Left colon (tissue), 2 donors: ENCODE measurements at regions of chr18 and their contacts with region 1.

Region 1: DNA sequence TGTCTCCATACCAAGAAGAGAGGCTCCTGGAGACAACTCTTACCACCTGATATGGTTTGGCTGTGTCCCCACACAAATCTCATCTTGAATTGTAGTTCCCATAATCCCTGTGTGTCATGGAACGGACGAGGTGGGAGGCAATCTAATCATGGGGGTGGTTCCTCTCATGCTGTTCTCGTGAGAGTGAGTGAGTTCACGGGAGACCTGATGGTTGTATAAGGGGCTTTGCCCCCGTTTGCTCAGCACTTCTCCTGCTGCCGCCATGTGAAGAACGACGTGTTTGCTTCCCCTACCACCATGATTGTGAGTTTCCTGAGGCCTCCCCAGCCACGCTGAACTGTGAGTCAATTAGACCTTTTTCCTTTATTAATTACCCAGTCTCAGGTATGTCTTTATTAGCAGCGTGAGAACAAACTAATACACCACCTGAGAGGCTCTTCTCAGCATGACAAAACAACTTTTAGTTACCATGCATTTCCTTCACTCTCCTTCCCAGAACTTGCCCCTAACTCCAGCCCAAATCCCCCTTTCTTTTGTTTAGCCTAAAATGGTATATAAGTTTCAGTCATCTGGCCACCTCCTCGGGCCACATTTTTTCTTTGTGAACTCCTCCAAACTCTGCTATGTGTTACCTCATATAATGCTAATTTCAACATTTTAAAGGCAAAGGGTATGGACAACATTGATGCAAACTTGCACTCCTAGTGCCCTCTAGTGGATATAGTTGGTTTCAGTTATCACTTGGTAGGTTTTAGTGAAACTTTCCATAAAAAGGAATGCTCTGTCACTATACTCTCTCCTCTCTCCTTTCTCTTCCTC is 58.6 kb upstream of the SLC25A52 start:
- DNase-seq: no peak
- ATAC-seq: peak; percentile 62

Region 2: GRCh38 chr18:31378834-31379233 is 440.5 kb before region 1 on chr18:
- intact Hi-C with region 1: no loop called
- DNase-seq: no peak
- ATAC-seq: no peak

Region 3: DNA sequence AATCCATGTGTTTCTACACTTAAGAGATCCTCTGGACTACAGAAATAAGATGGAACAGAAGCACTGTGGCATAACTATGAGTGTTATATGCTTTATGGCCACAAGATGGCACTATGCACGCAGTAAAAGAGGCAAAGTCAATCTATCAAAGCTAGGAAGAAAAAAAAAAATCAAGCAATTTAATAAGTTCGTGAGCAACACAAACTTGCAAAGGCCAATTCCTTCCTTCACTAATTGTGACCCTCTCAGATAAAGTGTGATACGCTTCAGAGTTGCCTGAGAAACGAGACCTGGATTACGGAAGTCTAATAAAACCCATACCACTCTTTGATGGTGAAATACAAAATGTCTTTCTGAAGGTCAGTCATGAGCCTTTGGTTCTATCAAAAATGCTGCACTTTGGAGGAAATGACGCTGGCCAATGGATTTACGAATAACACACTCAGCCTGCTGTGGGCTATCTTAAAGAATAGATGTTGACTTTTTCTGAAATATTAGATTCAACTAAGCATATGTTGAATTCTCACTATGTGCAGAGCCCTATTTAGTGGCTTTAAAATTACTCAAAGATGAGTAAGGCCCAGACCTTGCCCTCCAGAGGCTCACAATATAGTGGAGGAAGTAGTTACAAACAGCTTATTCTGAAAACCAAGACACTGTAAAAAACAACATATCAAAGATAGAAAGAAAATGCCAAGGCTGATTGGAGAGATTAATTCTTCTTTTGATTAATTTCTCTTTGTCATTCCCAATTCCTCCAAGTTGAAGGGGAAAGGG is 263.2 kb before region 1 on chr18:
- intact Hi-C with region 1: loop called in 1 of 2 experiments (anchors 5 kb)
- DNase-seq: no peak
- ATAC-seq: peak; percentile 69